Activated CD4-positive, alpha-beta memory T cell treated with anti-CD3 and anti-CD28 coated beads, Interleukin-2, amount 10 ng/mL, durations not matched to agents 7 days and 5 days (primary cell): ENCODE measurements at regions of chr22 and their contacts with region 1.

Region 1: GRCh38 chr22:37589636-37590035 is 9.7 kb upstream of the LGALS2 start:
- DNase-seq: no peak
- H3K4me3 Mint-ChIP-seq: no peak overlapping the region
- H3K27ac Mint-ChIP-seq: no peak overlapping the region
- H3K4me1 Mint-ChIP-seq: peaks cover 13% of the 10 kb centered on the region
- H3K27me3 Mint-ChIP-seq: peaks cover 20% of the 10 kb centered on the region

Region 2: DNA sequence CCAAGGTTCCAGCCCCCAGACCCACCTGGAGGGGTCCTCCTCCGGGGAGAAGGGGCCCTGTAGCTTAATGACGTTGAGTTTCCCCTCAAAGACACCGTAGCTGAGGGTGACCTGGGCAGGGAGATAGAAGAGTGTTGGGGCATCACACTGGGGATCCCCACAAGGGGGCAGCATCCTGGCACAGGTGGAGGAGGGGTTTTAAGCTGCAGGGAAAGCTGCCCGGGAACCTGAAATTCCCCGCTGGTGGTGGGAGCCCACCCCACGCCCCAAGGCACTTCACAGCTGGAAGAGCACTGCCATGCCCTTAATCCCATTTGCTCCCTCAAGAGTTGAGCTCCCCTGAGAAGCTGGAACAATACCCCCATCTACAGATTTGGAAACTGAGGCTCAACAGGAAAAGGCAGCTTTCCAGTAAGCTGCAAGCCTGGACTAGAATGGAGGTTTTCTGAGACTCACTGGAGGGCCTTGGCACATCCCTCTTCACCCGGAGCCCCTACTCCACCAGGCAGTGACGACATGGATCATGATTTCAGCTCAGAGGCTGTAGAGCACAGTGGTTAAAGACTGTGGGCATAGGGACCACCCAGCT is 117.1 kb before region 1 on chr22:
- CTCF ChIA-PET with region 1: interaction called, 14 read pairs
- POLR2A ChIA-PET with region 1: no interaction called
- DNase-seq: peak; percentile 48
- H3K4me3 Mint-ChIP-seq: no peak overlapping the region
- H3K27ac Mint-ChIP-seq: peak overlapping the region; percentile 21
- H3K4me1 Mint-ChIP-seq: peaks cover 9% of the 10 kb centered on the region
- H3K27me3 Mint-ChIP-seq: no peaks in the 10 kb centered on the region

Region 3: DNA sequence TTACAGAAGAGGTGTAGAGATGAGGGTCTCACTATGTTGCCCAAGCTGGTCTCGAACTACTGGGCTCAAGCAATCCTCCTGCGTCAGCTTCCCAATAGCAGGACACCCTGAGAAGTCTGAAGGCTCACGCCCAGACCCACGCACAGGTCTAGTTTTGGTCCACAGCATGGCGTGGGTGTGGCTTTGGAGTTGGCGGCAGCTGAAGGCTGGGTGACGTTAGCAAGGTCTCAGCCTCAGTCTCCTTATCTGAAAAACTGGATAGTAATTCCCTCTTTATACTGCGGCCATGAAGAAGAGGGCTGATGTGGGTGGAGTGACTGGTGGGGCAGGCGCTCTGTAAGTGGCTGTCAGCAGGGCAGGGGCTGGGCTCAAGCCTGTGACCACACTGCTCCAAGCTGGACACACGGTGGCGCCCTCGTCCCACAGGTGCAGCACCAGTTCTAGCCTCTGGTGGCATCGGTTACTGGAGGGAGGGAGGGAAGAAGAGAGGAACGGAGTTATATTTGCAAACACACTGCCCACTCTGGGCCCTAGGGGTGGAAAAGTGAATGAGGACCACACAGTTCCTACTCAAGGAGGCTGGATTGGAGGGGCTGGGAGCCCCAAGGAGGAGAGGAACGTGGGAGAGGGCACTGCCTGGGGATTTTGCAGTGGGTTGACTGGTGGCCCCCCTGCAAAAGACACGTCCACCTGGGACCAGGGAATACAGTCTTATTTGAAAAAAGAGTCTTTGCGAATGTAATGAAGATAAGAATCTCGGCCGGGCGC is 50.9 kb before region 1 on chr22:
- CTCF ChIA-PET with region 1: interaction called, 85 read pairs
- POLR2A ChIA-PET with region 1: interaction called, 11 read pairs
- DNase-seq: peak; percentile 94
- H3K4me3 Mint-ChIP-seq: no peak overlapping the region
- H3K27ac Mint-ChIP-seq: no peak overlapping the region
- H3K4me1 Mint-ChIP-seq: peaks cover 50% of the 10 kb centered on the region
- H3K27me3 Mint-ChIP-seq: peaks cover 21% of the 10 kb centered on the region

Region 4: DNA sequence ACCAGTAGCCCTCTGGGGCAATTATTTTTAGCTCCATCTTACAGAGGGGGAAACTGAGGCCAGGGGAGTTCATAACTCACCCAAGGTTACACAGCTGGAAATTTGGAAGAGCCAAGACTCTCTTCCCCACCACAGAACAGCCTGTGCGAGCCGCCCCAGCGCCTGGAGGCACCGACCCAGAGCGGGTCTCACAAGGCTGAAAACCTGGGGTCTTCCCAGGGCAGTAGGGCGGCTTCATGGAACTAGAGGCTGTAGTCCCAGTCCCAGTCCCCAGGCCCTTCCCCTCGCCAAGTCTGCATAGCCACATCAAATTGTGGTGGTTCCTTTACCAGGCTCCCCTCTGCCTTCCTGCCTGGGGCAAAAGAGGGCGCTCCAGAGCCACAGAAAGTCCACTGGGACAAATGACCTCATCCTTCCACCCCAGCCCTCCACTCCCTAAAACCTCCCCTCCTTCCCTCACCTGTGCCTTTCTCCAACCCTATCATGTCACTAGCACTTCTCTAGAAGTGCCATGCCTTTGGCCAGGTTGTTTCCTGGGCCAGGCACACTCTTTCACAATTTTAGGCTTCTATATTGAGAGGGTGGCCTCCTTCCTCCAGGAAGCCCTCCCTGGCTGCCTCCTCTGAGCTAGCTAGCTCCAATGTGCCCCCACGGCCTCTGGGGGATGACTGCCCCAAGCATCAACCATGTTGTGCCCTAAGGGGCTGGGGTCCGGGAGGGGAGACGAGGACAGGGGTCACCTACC is 44.5 kb before region 1 on chr22:
- CTCF ChIA-PET with region 1: interaction called, 85 read pairs
- POLR2A ChIA-PET with region 1: interaction called, 5 read pairs
- DNase-seq: peak; percentile 73
- H3K4me3 Mint-ChIP-seq: no peak overlapping the region
- H3K27ac Mint-ChIP-seq: no peak overlapping the region
- H3K4me1 Mint-ChIP-seq: peaks cover 30% of the 10 kb centered on the region
- H3K27me3 Mint-ChIP-seq: peaks cover 11% of the 10 kb centered on the region

Region 5: DNA sequence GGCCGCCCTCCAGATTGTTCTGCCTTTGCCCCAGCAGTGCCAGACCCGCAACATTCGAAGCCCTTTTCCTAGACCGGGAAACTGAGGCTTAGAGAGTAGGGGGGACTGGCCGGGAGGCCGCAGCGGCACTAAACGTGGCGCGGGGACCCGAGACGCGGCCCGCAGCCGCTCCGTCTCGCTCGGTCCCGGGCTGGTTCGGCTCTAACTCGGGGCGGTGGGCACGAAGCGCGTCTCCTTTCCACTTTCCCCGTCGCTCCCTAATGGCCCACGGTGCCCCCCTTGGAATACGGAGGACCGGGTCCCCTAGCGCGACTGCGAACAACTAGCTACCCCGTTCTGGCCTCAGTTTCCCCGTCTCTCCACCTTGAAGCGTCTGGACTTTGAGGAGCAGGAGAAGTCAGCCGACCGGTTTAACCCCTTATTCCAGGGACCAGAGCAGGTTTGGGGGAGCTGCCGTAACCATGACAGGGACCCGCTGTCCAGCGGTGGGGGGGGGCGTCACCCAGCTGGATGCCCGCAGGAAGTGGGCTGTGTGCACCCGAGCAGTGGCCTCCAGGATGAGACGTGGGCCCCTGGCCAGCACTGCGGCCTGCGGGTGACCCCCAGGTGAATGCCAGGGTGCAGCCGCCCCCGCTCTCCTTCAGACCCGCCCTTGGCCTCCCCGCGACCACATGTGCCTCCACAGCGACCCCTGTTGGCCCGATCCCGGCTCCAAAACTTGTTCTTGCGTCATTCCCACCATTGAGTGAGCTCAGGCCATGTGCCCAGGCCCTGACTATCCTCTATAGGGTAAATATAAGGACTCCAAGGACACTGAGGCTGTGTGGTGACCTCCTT is 28.2 kb before region 1 on chr22:
- CTCF ChIA-PET with region 1: interaction called, 62 read pairs
- POLR2A ChIA-PET with region 1: interaction called, 4 read pairs
- DNase-seq: peak; percentile 80
- H3K4me3 Mint-ChIP-seq: peak overlapping the region; percentile 35
- H3K27ac Mint-ChIP-seq: no peak overlapping the region
- H3K4me1 Mint-ChIP-seq: peaks cover 32% of the 10 kb centered on the region
- H3K27me3 Mint-ChIP-seq: peaks cover 67% of the 10 kb centered on the region

Region 6: GRCh38 chr22:37566903-37567820 is 22.5 kb before region 1 on chr22:
- CTCF ChIA-PET with region 1: interaction called, 62 read pairs
- POLR2A ChIA-PET with region 1: interaction called, 4 read pairs
- DNase-seq: peak; percentile 97
- H3K4me3 Mint-ChIP-seq: peak overlapping the region; percentile 54
- H3K27ac Mint-ChIP-seq: peak overlapping the region; percentile 79
- H3K4me1 Mint-ChIP-seq: peaks cover 27% of the 10 kb centered on the region
- H3K27me3 Mint-ChIP-seq: peaks cover 43% of the 10 kb centered on the region

Region 7: DNA sequence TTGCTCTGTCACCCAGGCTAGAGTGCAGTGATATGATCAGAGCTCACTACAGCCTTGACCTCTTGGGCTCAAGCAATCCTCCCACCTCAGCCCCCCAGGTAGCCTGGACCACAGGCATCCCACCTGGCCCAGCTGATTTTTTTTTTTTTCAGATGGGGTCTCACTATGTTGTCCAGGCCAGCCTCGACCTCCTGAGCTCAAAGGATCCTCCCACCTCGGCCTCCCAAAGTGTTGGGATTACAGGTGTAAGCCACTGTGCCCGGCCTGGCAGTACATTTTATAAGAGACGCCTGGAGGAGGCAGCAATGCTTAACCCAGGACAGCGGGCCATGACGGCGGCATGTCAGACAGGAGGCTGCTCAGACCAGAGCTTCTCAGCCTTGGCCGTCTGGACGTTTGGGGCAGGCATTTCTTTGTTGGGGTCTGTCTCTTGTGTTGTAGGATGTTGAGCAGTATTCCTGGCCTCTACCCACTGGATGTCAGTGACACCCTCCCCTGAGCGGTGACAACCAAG is 14.1 kb before region 1 on chr22:
- CTCF ChIA-PET with region 1: interaction called, 17 read pairs
- POLR2A ChIA-PET with region 1: interaction called, 3 read pairs
- DNase-seq: no peak
- H3K4me3 Mint-ChIP-seq: no peak overlapping the region
- H3K27ac Mint-ChIP-seq: no peak overlapping the region
- H3K4me1 Mint-ChIP-seq: peaks cover 6% of the 10 kb centered on the region
- H3K27me3 Mint-ChIP-seq: peaks cover 17% of the 10 kb centered on the region

Region 8: DNA sequence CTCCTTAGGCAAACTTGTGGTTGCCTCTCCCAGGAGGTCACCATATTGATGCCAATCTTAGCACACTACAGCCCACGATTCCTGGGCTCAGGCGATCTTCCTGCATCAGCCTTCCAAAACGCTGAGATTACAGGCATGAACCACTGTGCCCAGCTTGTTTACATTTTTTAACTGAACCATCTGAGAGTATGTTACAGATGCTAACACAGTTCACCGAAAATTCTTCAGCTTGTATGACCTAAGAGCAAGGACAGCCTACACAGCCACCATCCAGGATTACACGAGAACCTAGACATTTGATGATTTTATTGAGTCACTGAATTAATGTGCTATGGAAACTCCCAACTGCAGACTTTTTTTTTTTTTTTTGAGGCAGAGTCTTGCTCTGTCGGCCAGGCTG is 80.0 kb after region 1 on chr22:
- CTCF ChIA-PET with region 1: no interaction called
- POLR2A ChIA-PET with region 1: no interaction called
- DNase-seq: no peak
- H3K4me3 Mint-ChIP-seq: no peak overlapping the region
- H3K27ac Mint-ChIP-seq: no peak overlapping the region
- H3K4me1 Mint-ChIP-seq: peaks cover 33% of the 10 kb centered on the region
- H3K27me3 Mint-ChIP-seq: no peaks in the 10 kb centered on the region

Region 9: GRCh38 chr22:37741312-37741795 is 151.7 kb after region 1 on chr22:
- CTCF ChIA-PET with region 1: no interaction called
- POLR2A ChIA-PET with region 1: no interaction called
- DNase-seq: no peak
- H3K4me3 Mint-ChIP-seq: no peak overlapping the region
- H3K27ac Mint-ChIP-seq: no peak overlapping the region
- H3K4me1 Mint-ChIP-seq: peaks cover 24% of the 10 kb centered on the region
- H3K27me3 Mint-ChIP-seq: no peaks in the 10 kb centered on the region